WTC11 (cell line): ENCODE measurements at regions of chr2 and their contacts with region 1.

Region 1: DNA sequence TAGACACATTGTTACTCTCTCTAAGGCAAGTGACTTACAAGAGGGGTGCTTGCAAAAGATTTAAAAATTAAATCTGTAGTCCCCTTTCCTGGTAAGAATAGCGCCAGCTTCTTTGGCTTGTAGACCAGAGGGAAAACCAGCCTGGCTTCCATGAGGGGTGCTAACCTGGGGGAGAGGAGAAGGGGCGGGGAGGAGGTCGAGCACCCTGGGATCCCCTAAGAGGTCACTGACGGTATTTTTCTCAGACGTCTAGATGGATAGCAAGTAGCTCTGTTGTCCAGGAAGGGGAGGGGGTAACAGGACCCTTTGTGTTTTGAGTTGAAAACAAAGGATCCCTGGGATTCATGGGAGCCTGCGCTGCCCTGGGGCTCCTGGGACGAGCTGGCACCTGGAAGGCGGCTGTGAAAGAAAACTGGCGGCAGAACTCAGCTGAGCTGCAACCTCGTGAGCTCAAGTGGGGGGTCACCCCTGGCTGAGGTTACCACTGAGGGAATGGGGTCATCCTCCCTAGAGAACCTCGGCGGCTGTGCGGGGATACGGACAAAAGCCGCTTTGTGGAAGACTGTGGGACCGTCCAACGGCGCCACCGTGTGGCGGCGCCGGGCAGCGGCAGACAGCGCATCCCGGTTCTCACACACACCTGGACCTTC is 37.8 kb upstream of the MRPL19 start:
- DNase-seq: peak; percentile 80
- ATAC-seq: peak; percentile 88
- H3K4me3 Mint-ChIP-seq: peak overlapping the region; percentile 66
- H3K27ac Mint-ChIP-seq: no peak overlapping the region
- H3K4me1 Mint-ChIP-seq: peaks cover 13% of the 10 kb centered on the region
- H3K27me3 Mint-ChIP-seq: peaks cover 16% of the 10 kb centered on the region
- CTCF ChIP-seq: peak; percentile 86

Region 2: GRCh38 chr2:75466708-75467311 is 142.0 kb before region 1 on chr2:
- CTCF ChIA-PET with region 1: interaction called, 55 read pairs
- POLR2A ChIA-PET with region 1: no interaction called
- DNase-seq: peak; percentile 71
- ATAC-seq: peak; percentile 79
- H3K4me3 Mint-ChIP-seq: no peak overlapping the region
- H3K27ac Mint-ChIP-seq: no peak overlapping the region
- H3K4me1 Mint-ChIP-seq: peaks cover 15% of the 10 kb centered on the region
- H3K27me3 Mint-ChIP-seq: no peaks in the 10 kb centered on the region
- CTCF ChIP-seq: peak; percentile 80

Region 3: GRCh38 chr2:75560768-75561565 is 47.8 kb before region 1 on chr2 and contains the start of gene EVA1A:
- CTCF ChIA-PET with region 1: interaction called, 22 read pairs
- POLR2A ChIA-PET with region 1: interaction called, 4 read pairs
- DNase-seq: peak; percentile 73
- ATAC-seq: peak; percentile 65
- H3K4me3 Mint-ChIP-seq: peak within 1 kb of the TSS; percentile 97
- H3K27ac Mint-ChIP-seq: peak within 1 kb of the TSS; percentile 48; the same call in 1 of the 2 replicates
- H3K4me1 Mint-ChIP-seq: peaks cover 40% of the 10 kb centered on the region
- H3K27me3 Mint-ChIP-seq: peaks cover 29% of the 10 kb centered on the region
- CTCF ChIP-seq: no peak
- total RNA-seq, gene EVA1A: 3.2 to 4.1 TPM (median 3.3 TPM) in 3 replicates

Region 4: GRCh38 chr2:75667884-75668283 is 59.1 kb after region 1 on chr2:
- CTCF ChIA-PET with region 1: no interaction called
- POLR2A ChIA-PET with region 1: no interaction called
- DNase-seq: no peak
- ATAC-seq: no peak
- H3K4me3 Mint-ChIP-seq: no peak overlapping the region
- H3K27ac Mint-ChIP-seq: no peak overlapping the region
- H3K4me1 Mint-ChIP-seq: peaks cover 17% of the 10 kb centered on the region
- H3K27me3 Mint-ChIP-seq: no peaks in the 10 kb centered on the region
- CTCF ChIP-seq: no peak